ENCODE measurements at regions of chr20 and their contacts with region 1.

Region 1: DNA sequence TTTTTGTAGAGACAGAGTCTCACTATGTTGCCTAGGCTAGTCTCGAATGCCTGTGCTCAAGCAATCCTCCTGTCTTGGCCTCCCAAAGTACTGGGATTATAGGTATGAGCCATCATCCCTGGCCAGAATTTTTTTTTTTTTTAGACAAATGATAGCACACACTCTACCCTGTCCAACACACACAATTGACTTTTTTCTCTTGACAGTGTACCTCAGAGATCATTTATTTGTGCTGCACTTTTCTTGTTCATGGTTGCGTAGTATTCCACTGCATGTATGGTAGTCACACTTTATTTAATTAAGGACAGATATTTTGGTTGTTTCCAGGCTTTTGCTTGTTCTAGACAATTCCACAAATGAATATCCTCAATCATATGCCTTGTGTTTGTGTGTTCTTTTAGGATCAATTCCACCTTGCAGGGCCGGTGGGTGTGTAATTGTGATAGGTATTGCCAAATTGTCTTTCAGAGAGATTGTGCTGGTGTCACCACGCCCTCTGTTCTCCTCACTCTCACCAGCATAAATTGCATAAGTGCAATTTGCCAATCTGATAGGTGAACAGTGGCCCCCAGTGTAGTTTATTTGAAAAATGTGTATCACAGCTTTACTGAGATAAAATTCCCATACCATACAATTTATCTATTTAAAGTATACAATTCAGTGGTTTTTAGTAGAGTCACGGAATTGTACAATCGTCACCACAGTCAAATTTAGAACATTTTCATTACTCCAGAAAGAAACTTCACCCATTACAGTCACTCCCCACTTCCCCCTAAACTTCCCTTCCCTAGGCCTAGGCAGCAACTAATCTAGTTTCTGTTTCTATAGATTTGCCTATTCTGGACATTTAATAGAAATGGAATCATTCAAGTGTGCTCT is 20.1 kb downstream of the SRC start:
- DNase-seq: peak; percentile 73
- ATAC-seq: peak; percentile 88
- H3K4me3 ChIP-seq: peak overlapping the region in 1 of 5 experiments; percentile 39
- H3K4me3 Mint-ChIP-seq: peak overlapping the region; percentile 32
- H3K27ac ChIP-seq: peak overlapping the region; percentile 64 to 81
- H3K27ac Mint-ChIP-seq: peak overlapping the region; percentile 62
- H3K4me1 ChIP-seq: peaks cover 24 to 35% of the 10 kb centered on the region in 2 donors
- H3K4me1 Mint-ChIP-seq: peaks cover 28% of the 10 kb centered on the region
- H3K27me3 ChIP-seq: no peaks in the 10 kb centered on the region
- H3K27me3 Mint-ChIP-seq: no peaks in the 10 kb centered on the region
- CTCF ChIP-seq: no peak

Region 2: GRCh38 chr20:37602634-37603033 is 236.6 kb after region 1 on chr20:
- CTCF ChIA-PET with region 1: no interaction called
- POLR2A ChIA-PET with region 1: interaction called, 12 read pairs
- intact Hi-C with region 1: no loop called
- DNase-seq: no peak
- ATAC-seq: no peak
- H3K4me3 ChIP-seq: no peak overlapping the region
- H3K4me3 Mint-ChIP-seq: no peak overlapping the region
- H3K27ac ChIP-seq: no peak overlapping the region
- H3K27ac Mint-ChIP-seq: no peak overlapping the region
- H3K4me1 ChIP-seq: no peaks in the 10 kb centered on the region
- H3K4me1 Mint-ChIP-seq: no peaks in the 10 kb centered on the region
- H3K27me3 ChIP-seq: peaks cover 0 to 26% (median 4%) of the 10 kb centered on the region in 4 experiments
- H3K27me3 Mint-ChIP-seq: peaks cover 43% of the 10 kb centered on the region
- CTCF ChIP-seq: no peak

Measured in B cell (primary cell).